Right ventricle myocardium inferior (tissue), 1 donor: ENCODE measurements at regions of chr6 and their contacts with region 1.

Region 1: GRCh38 chr6:42547407-42548329 is 16.2 kb upstream of the UBR2 start:
- DNase-seq: peak; percentile 94
- ATAC-seq: peak; percentile 99

Region 2: GRCh38 chr6:42217519-42218367 is 329.9 kb before region 1 on chr6 and contains the start of gene MRPS10:
- intact Hi-C with region 1: loop called (anchors 5 kb)
- DNase-seq: peak; percentile 94
- ATAC-seq: peak; percentile 99
- total RNA-seq, gene MRPS10: 62.3 TPM

Region 3: DNA sequence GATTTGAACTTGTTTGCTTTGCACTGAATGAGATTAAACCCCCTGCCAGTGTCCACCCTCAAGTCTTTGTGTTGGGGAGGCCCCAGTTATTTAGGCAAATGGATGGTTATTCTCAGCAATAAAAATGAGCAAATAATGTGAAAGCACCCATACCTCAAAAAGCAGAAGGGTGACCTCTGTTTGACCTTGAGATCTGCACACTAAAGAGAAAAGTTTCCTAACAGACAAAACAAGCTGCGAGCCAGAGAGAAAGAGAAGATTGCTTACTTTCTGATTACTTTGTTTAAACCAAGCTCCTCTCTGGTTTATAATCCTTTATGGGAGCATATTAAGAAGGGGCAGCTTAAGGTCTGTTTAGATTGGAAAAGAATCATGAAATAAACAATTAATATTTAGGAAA is 65.5 kb before region 1 on chr6:
- intact Hi-C with region 1: no loop called
- DNase-seq: no peak
- ATAC-seq: no peak

Region 4: GRCh38 chr6:42563697-42564505 is 16.2 kb after region 1 on chr6 and contains the start of gene UBR2:
- intact Hi-C with region 1: no loop called
- DNase-seq: peak; percentile 98
- ATAC-seq: peak; percentile 99
- total RNA-seq, gene UBR2: 31.3 TPM